Calu3 (cell line): ENCODE measurements at regions of chr2 and their contacts with region 1.

Region 1: GRCh38 chr2:213806125-213806726 is 522.0 kb downstream of the SPAG16 start:
- DNase-seq: no peak
- H3K4me3 Mint-ChIP-seq: no peak overlapping the region
- H3K27ac Mint-ChIP-seq: no peak overlapping the region
- H3K4me1 Mint-ChIP-seq: no peaks in the 10 kb centered on the region
- H3K27me3 Mint-ChIP-seq: no peaks in the 10 kb centered on the region
- CTCF ChIP-seq: peak; percentile 41

Region 2: GRCh38 chr2:215002500-215002899 is 1196.3 kb after region 1 on chr2:
- CTCF ChIA-PET with region 1: no interaction called
- intact Hi-C with region 1: loop called (anchors 5 kb)
- DNase-seq: peak; percentile 22
- H3K4me3 Mint-ChIP-seq: no peak overlapping the region
- H3K27ac Mint-ChIP-seq: no peak overlapping the region
- H3K4me1 Mint-ChIP-seq: no peaks in the 10 kb centered on the region
- H3K27me3 Mint-ChIP-seq: no peaks in the 10 kb centered on the region
- CTCF ChIP-seq: peak; percentile 33